Transverse colon (tissue), 4 donors: ENCODE measurements at regions of chr4 and their contacts with region 1.

Region 1: DNA sequence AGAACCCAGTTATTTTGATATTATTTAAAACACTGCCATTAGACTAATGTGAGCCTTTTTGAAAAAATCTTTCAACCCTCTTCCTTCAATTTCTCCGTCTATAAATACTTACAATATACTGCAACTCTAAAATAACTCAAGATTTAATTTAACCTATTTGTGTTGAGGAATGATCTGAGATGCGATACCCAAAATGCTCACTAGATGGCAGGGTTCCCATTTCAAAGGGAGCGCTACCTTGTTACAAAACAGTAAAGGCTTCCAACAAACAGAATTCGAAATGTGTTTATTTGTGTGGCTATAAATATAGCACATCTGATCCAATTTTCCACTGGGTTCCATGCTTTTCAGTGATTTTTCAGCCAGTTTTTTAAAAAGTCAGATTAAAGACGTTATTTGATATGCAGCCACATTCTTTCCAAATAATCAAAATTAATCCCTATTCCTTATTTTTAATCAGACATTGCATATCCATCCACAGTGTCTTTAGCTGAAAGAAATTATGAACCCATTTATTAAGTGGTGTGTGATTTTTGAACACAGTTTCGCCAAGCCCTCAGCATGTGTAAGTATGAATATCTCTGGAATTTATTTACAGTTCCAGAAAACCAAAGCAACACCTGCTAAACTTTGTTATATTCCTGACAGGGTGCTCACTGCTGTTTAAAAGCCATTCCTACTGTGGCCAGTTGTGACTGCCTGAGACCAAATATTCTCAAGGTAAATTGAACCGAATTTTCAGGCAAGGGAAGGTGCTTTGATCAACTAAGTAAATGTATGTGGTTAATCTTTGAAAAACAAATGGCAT is 668.0 kb upstream of the LCORL start:
- DNase-seq: peak; percentile 68
- H3K4me3 ChIP-seq: no peak overlapping the region
- H3K27ac ChIP-seq: no peak overlapping the region
- H3K4me1 ChIP-seq: peaks cover 0 to 20% (median 5%) of the 10 kb centered on the region in 4 donors
- H3K27me3 ChIP-seq: no peaks in the 10 kb centered on the region
- CTCF ChIP-seq: peak; percentile 80 to 92 (median 87)
- EP300 ChIP-seq: no peak
- POLR2A ChIP-seq: no peak

Region 2: DNA sequence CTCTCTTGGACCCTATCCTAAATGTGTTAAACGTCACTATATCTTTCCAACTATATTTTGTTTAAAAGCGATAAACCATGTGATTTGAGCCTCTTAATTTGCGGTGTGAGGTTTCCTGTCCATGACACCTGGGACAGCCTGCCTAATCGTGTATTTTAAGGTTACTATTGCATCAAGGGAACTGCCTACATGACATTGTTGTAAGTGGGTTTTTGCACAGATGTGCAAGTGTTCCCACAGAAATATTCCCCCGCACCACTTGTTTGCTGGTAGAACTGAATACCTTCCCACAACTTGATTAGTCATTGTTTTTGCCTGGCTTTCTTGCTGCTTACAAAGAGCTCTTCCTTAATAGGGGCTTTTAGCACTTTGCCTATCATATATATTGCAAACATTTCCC is 902.9 kb before region 1 on chr4:
- in situ Hi-C with region 1: no loop called
- intact Hi-C with region 1: no loop called
- DNase-seq: no peak
- H3K4me3 ChIP-seq: no peak overlapping the region
- H3K27ac ChIP-seq: no peak overlapping the region
- H3K4me1 ChIP-seq: peaks cover 0 to 6% (median 4%) of the 10 kb centered on the region in 4 donors
- H3K27me3 ChIP-seq: peaks cover 12% of the 10 kb centered on the region
- CTCF ChIP-seq: no peak
- EP300 ChIP-seq: no peak
- POLR2A ChIP-seq: no peak

Region 3: DNA sequence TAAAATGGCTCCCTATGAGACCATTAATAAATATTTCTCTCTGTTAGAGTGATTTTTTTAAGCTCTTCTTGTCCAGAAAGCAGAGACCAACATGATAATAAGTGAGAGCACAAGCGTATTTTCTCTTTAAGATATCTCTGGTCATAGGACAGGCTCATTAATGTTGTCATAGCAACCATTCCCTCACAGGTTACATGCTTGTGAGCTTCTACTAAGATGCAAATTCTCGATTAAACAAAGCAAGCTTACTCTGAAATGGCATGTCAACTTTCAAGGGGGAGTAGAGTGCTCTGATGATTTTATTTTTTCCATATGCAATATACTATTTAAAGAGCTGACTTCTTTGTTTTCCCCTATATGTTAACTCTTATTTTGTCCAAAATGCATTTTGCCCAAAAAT is 180.7 kb before region 1 on chr4:
- in situ Hi-C with region 1: no loop called
- intact Hi-C with region 1: no loop called
- DNase-seq: no peak
- H3K4me3 ChIP-seq: no peak overlapping the region
- H3K27ac ChIP-seq: no peak overlapping the region
- H3K4me1 ChIP-seq: no peaks in the 10 kb centered on the region
- H3K27me3 ChIP-seq: no peaks in the 10 kb centered on the region
- CTCF ChIP-seq: no peak
- EP300 ChIP-seq: no peak
- POLR2A ChIP-seq: no peak

Region 4: GRCh38 chr4:19224820-19225219 is 535.3 kb after region 1 on chr4:
- in situ Hi-C with region 1: loop called in 1 of 4 experiments (anchors 25 kb)
- intact Hi-C with region 1: no loop called
- DNase-seq: no peak
- H3K4me3 ChIP-seq: no peak overlapping the region
- H3K27ac ChIP-seq: no peak overlapping the region
- H3K4me1 ChIP-seq: no peaks in the 10 kb centered on the region
- H3K27me3 ChIP-seq: no peaks in the 10 kb centered on the region
- CTCF ChIP-seq: peak; percentile 28 to 45 (median 31)
- EP300 ChIP-seq: no peak
- POLR2A ChIP-seq: no peak

Region 5: DNA sequence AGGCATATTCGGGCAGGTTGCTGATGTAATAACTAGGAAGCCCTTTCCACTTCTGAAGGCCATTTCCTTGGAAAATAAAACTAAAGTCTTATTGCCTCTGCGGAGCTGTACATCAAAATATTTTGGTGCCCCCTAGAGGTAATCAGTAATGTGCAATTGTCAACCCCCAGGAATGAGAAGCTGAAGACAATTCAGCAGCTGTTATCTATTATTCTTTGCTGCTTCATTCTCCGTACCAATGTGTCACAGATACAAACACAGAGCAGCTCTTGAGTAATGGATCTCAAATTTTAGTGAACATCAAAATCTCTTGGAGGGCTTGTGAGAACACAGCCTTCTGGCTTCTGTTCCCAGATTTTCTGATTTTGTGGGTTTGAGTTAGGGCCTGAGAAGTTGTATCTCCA is 1558.6 kb after region 1 on chr4:
- in situ Hi-C with region 1: loop called in 2 of 4 experiments (anchors 25 kb)
- intact Hi-C with region 1: no loop called
- DNase-seq: no peak
- H3K4me3 ChIP-seq: no peak overlapping the region
- H3K27ac ChIP-seq: no peak overlapping the region
- H3K4me1 ChIP-seq: peaks cover 0 to 11% (median 9%) of the 10 kb centered on the region in 4 donors
- H3K27me3 ChIP-seq: peaks cover 25% of the 10 kb centered on the region
- CTCF ChIP-seq: peak; percentile 46 to 59 (median 57)
- EP300 ChIP-seq: no peak
- POLR2A ChIP-seq: no peak

Region 6: GRCh38 chr4:20662851-20663250 is 1973.3 kb after region 1 on chr4:
- in situ Hi-C with region 1: loop called in 1 of 4 experiments (anchors 25 kb)
- intact Hi-C with region 1: no loop called
- DNase-seq: no peak
- H3K4me3 ChIP-seq: no peak overlapping the region
- H3K27ac ChIP-seq: no peak overlapping the region
- H3K4me1 ChIP-seq: no peaks in the 10 kb centered on the region
- H3K27me3 ChIP-seq: no peaks in the 10 kb centered on the region
- CTCF ChIP-seq: no peak
- EP300 ChIP-seq: no peak
- POLR2A ChIP-seq: no peak

Region 7: DNA sequence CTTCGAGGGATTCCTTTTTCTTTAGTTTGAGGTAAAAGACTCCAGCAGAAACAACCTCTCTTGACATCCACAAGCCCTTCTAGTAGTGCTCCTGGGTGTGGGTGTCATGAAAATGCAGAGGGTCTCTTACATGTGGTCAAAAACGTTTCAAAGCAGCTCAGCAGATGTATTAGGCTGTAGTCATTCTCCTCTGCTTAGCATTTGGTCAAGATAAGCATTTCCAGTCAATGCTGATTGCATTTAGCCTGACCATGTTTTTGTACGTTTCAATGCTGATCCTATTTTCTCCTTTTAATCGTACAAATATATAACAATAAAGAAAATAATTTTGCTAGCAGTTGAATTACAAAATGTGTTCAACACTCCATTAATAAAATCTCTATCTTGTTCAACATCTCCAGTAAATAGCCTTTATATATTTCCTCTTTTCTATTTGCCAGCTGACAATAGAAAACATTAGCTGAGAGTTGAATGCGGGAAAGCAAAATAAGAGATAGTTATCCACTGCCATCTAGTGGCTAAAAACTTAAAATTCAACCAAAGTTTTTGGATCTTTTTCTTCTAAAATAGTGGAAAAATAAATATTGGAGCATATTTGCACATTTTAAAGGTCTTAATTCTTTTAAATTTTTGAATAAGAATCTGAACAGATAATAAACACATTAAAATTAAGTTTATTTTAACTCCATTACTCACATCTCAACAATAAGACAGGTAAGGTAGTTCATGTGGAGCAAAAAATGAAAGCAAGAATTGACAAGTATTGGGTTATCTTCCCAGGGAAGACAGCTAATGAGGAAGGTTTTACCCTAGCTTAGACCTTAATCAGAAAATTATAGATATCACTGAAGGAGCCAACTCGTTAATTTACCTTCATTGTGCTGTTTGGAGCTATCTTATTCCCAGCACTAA is 1995.6 kb after region 1 on chr4:
- in situ Hi-C with region 1: loop called in 1 of 4 experiments (anchors 25 kb)
- intact Hi-C with region 1: no loop called
- DNase-seq: no peak
- H3K4me3 ChIP-seq: no peak overlapping the region
- H3K27ac ChIP-seq: no peak overlapping the region
- H3K4me1 ChIP-seq: peaks cover 0 to 7% (median 2%) of the 10 kb centered on the region in 4 donors
- H3K27me3 ChIP-seq: no peaks in the 10 kb centered on the region
- CTCF ChIP-seq: peak; percentile 59 to 70 (median 68)
- EP300 ChIP-seq: no peak
- POLR2A ChIP-seq: no peak